Uterus (tissue), 4 donors: ENCODE measurements at regions of chr17 and their contacts with region 1.

Region 1: DNA sequence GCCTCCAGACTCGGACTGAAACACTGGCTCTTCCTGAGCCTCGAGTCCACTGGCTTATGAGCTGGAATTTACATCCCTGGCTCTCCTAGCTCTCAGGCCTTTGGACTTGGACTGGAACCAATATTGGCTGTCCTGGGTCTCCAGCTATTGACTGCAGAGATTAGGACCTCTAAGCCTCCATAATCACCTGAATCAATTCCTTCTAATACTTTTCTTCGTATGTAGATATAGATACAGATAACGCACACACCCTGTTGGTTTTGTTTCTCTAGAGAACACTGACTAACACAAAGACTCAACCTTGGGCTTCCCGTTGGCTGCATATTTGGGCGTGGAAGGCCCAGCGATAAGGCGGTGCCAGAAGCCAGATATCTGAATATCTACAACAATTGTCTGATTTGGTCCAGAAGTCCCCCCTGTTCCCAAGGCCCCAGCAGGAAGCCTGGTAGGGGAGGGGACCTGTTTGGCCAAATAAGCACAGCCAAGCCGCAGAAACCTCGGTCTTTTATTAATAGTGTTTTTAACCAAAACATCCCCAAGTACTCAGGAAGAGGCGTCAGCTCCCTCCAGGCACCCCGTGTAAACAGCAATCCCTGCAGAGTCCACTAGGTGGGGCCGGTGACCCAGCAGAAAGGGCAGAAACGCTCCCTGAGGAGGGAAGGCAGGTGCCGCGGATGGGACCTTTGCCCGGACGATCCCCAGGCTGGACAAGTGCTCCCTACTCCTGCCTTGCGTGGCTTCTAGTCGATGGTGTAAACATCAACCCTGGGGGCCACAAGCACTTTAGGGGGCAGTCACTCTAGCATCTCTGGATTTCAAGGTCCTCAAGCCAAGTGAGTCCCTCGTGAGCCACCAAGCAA is 57.0 kb downstream of the ABR start:
- DNase-seq: peak; percentile 87 to 90
- H3K4me3 ChIP-seq: no peak overlapping the region
- H3K27ac ChIP-seq: peak overlapping the region; percentile 47 to 65
- H3K4me1 ChIP-seq: peaks cover 0 to 11% of the 10 kb centered on the region in 2 donors
- H3K27me3 ChIP-seq: no peaks in the 10 kb centered on the region
- CTCF ChIP-seq: peak; percentile 92 to 94 (median 92)
- POLR2A ChIP-seq: no peak

Region 2: DNA sequence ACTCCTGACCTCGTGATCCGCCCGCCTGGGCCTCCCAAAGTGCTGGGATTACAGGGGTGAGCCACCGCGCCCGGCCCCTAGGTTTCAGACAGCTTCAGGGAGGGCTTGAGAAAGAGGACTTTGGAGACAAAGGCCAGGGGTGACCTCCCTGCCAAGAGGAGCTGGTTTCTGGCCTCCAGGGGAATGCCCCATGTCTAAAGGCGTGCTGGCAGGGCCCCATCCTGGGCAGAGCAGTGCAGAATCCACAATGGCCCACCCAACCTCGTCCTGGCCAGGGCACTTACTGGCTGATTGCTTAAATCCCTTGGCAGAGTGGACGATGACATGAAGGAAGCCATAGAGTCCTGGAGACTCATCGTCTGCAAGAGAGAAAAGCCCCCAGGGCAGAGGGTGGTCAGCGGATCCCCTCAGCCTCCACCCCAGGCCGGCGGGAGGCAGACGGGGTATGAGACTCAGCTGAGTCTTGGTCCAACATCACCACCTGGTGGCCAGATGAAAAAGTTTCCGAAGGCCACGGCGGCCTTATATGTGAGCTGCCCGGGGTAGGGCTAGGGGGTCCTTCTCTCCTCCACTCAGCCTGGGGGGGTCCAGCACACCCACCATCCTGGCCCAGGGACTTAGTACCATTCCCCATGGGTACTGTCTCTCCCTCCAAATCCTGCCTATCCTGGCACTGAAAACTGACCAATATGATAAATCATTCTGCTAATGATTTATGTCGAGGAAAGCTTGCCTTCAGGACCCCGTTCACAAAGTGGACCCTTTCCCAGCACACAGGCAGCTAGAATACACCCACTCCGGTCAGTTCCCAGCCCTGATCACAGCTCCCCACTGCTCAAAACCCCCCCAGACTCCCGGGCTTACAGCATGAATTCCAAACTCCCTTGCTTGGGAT is 66.8 kb before region 1 on chr17:
- intact Hi-C with region 1: no loop called
- DNase-seq: peak; percentile 67 to 70
- H3K4me3 ChIP-seq: no peak overlapping the region
- H3K27ac ChIP-seq: peak overlapping the region in 1 of 2 donors; percentile 13
- H3K4me1 ChIP-seq: no peaks in the 10 kb centered on the region
- H3K27me3 ChIP-seq: no peaks in the 10 kb centered on the region
- CTCF ChIP-seq: peak; percentile 67 to 78 (median 76)
- POLR2A ChIP-seq: no peak

Region 3: DNA sequence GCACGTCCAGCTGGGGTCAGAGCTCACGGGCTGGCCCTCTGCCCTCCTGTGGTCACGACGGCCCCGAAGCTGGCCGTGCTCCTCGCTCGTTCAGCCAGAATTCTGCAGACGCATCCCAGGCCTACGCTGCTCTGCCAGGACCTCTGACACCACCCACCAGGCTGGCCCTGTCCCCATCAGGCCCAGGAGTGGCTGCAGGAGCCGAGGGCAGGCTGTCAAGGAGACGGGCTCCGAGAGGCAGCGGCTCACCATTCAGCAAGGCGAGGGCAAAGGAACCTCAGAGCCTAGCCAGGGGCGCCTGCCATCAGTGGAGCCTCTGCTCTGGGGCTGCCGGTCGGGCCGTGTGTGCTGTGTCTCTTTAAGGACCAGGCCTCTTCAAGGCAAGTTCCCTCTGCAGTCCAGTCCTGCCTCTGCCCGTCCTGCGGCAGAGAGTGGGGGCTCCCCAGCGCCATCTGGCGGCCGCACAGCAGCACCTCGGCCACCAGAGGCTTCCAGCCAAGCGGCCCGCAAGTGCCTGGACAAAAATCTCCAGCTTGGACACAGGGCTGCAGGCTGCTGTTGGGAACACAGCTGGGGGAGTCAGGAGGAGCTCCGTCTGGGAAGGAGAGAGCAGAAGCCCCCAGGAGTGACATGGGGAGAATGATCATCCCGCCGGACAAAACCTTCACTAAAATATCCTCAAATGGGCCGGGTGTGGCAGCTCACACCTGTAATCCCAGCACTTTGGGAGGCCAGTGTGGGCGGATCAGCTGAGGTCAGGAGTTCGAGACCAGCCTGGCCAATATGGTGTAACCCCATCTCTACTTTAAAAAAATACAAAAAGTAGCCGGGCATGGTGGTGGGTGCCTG is 64.4 kb after region 1 on chr17:
- intact Hi-C with region 1: loop called (anchors 2 kb)
- DNase-seq: peak; percentile 82 to 90
- H3K4me3 ChIP-seq: peak overlapping the region in 1 of 2 donors; percentile 14
- H3K27ac ChIP-seq: peak overlapping the region; percentile 70 to 77
- H3K4me1 ChIP-seq: no peaks in the 10 kb centered on the region
- H3K27me3 ChIP-seq: no peaks in the 10 kb centered on the region
- CTCF ChIP-seq: peak; percentile 95 to 99 (median 98)
- POLR2A ChIP-seq: peak in 1 of 2 donors; percentile 34

Region 4: GRCh38 chr17:1865252-1866037 is 742.7 kb after region 1 on chr17:
- intact Hi-C with region 1: no loop called
- DNase-seq: no peak
- H3K4me3 ChIP-seq: no peak overlapping the region
- H3K27ac ChIP-seq: no peak overlapping the region
- H3K4me1 ChIP-seq: no peaks in the 10 kb centered on the region
- H3K27me3 ChIP-seq: no peaks in the 10 kb centered on the region
- CTCF ChIP-seq: peak; percentile 28 to 58 (median 36)
- POLR2A ChIP-seq: no peak